ENCODE measurements at regions of chr9 and their contacts with region 1.

Region 1: DNA sequence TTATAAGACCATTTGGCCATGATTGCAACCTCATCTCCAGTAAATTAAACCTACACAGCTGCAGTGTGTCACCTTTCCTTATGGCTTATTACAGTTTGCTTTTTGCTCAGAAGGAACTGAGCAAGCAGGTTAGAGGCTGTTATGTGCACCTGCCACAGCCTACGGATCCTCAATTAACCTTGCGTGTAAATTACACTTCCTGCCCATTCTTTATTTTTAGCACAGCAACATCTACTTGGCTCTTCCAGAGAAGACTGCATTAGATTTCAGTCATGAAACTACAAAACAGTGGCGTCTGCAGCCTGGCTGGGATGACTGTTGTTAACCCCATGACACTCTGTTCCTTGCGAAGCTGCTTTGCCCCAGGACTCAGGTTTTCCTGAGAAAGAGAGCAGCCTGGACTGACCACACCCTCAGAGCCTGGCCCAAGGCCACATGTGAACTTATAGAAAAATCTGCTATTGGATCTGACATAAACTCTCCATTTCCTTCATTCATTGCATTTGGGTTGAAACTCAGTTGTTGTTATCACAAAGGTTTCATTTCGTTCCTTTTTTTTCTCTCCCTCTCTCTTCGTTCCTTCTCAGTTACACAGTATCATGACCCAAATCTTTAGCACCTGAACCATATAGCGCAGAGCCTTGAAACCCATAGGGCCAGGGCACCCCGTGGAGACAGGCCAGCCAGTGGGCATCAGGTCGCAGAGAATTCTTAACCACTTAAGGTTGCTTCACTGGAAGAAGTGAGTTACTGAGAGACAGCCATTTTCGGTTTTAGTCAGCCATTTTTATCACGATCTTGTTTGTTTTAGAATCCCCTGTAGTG is 138.6 kb downstream of the PALM2AKAP2 start:
- DNase-seq: peak; percentile 75
- H3K4me3 Mint-ChIP-seq: peak overlapping the region; percentile 58
- H3K27ac Mint-ChIP-seq: peak overlapping the region; percentile 97
- H3K4me1 Mint-ChIP-seq: peaks cover 29% of the 10 kb centered on the region
- H3K27me3 Mint-ChIP-seq: peaks cover 1% of the 10 kb centered on the region

Region 2: DNA sequence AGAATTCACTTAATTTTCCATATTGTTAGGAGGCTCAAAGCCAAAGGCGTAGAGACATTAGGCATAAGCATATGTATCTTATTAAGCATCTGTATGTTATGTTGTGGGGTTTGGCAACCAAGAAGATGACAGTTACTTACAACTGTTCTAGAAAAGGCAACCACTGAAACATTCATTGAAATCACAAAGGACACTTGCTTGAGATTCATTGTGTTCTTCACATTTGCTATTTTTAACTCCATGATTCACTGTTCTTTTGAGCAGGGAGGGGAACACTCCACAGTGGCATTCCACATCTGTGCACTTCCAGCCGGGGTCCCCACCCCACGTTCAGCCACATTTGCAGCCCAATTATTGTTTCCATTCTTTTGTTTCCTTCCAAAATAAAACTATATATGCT is 31.5 kb before region 1 on chr9:
- CTCF ChIA-PET with region 1: no interaction called
- POLR2A ChIA-PET with region 1: no interaction called
- intact Hi-C with region 1: loop called (anchors 1 kb)
- DNase-seq: no peak
- H3K4me3 Mint-ChIP-seq: no peak overlapping the region
- H3K27ac Mint-ChIP-seq: peak overlapping the region; percentile 84
- H3K4me1 Mint-ChIP-seq: peaks cover 50% of the 10 kb centered on the region
- H3K27me3 Mint-ChIP-seq: peaks cover 1% of the 10 kb centered on the region

Region 3: GRCh38 chr9:109950710-109951443 is 32.3 kb after region 1 on chr9:
- CTCF ChIA-PET with region 1: interaction called, 8 read pairs
- POLR2A ChIA-PET with region 1: interaction called, 13 read pairs
- intact Hi-C with region 1: loop called (anchors 1 kb)
- DNase-seq: peak; percentile 64
- H3K4me3 Mint-ChIP-seq: peak overlapping the region; percentile 23
- H3K27ac Mint-ChIP-seq: peak overlapping the region; percentile 82
- H3K4me1 Mint-ChIP-seq: peaks cover 30% of the 10 kb centered on the region
- H3K27me3 Mint-ChIP-seq: no peaks in the 10 kb centered on the region

Region 4: DNA sequence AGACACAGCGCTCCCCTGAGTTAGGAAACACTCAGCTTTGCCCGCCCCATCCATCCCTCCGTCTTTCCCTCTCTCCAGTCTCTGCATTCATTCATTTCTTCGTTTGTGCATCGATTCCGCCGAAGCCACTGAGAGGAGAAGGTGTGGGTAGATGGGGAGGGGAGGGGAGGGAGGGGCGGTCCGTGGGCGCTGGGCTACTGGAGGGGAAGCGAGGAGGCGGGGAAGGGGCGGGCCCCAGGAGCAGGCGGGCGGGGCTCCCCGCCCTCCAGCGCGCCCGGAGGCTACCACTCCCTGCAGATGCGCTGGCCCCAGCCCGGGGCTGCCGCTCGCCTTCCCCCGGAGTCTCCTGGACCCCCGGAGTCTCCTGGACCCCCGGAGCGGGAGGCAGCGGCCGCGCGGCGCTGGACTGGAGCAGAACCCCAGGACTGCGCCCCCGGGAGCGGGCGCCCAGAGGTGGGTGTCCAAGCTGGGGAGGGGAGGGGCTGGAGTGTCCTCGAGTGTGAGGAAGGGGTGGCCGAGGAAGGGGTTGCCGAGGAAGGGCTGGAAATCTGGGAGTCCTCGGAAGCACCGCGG is 129.9 kb after region 1 on chr9:
- CTCF ChIA-PET with region 1: interaction called, 3 read pairs
- POLR2A ChIA-PET with region 1: interaction called, 6 read pairs
- intact Hi-C with region 1: loop called (anchors 1 kb)
- DNase-seq: peak; percentile 89
- H3K4me3 Mint-ChIP-seq: peak overlapping the region; percentile 90
- H3K27ac Mint-ChIP-seq: peak overlapping the region; percentile 72
- H3K4me1 Mint-ChIP-seq: peaks cover 39% of the 10 kb centered on the region
- H3K27me3 Mint-ChIP-seq: peaks cover 13% of the 10 kb centered on the region

Measured in activated CD4-positive, alpha-beta memory T cell treated with anti-CD3 and anti-CD28 coated beads for 36 hours (primary cell).